Mammary epithelial cell (primary cell): ENCODE measurements at regions of chr21 and their contacts with region 1.

Region 1: DNA sequence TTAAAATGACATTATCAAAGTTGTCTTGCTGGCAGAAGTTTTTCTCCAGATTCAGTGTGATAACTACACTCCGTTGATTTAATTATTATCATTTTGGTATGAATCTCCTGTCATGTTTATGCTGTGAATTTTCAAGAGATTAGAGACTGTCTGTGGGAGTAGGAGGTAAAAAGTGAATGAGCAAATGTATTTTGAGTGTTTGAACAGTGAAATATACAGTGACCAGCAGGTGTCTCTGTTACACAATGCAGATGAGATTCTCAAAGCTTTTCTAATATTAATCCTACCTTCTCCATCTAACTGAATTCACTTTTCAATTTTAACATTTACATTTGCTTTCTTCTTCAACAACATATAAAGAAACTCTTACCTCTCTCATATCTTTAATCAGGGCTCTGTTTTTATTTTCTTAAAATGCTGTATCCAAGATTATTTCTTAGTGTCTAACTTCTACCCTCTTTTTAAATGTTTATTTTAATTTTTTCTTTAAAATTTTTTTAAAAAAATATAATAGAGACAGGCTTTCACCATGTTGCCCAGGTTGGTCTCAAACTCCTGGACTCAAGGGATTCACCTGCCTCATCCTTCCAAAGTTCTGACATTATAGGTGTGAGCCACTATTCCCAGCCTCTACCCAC is 20.9 kb upstream of the HSPA13 start:
- DNase-seq: peak; percentile 12
- H3K4me3 ChIP-seq: no peak overlapping the region
- H3K27ac ChIP-seq: no peak overlapping the region
- H3K4me1 ChIP-seq: no peaks in the 10 kb centered on the region
- H3K27me3 ChIP-seq: no peaks in the 10 kb centered on the region
- CTCF ChIP-seq: peak; percentile 55 to 63

Region 2: DNA sequence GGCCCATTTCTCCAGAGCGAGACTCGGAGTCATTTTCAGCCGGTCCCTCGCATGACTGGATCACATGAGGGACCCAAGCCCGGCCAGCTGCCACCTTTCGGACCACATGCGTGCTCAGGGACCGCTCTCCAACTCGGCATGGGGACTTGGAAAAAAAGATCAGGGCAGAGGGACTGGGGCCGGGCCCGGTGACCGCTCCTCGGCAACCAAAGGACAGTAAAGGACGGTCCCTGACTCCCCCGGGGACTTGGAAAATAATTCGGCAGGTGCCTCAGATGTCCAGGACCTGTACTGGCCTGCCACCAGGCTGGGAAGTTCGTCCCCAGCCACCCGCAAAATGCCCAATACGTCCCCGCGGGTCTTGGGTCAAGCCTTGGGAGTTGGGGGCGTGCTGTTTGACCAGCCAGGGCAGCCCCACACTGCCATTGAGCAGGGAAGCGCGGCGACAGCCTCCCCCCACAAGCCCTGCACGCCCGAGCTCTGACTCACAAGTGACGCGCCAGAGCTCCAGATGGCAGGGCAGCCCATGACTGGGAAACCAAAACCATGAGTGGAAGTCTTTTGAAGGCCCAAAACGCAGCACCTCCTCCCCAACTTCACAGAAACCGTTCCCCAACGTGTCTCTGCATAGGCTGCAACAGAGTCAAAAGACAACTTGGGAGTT is 327.5 kb before region 1 on chr21:
- CTCF ChIA-PET with region 1: no interaction called
- dilution Hi-C with region 1: no loop called
- in situ Hi-C with region 1: no loop called
- intact Hi-C with region 1: no loop called
- DNase-seq: no peak
- H3K4me3 ChIP-seq: no peak overlapping the region
- H3K27ac ChIP-seq: no peak overlapping the region
- H3K4me1 ChIP-seq: no peaks in the 10 kb centered on the region
- H3K27me3 ChIP-seq: no peaks in the 10 kb centered on the region
- CTCF ChIP-seq: no peak

Region 3: DNA sequence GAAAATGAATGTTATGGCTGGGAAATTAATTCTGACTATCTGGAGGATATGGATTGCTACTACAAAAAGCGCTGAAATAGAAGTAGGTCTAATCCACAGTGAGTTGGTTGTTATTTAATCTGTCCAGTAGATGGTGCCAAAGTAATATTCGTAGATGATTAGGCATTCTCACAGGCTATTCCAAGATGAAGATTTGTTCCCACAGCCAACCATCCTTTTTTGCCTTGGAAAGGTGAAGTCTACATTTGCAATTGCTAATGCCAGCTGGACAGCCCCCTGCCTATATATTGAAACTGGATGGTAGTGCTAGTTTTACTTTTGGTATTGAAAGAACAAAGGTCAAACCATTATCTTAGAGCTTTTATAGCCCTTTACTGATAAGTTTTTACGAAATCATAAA is 144.1 kb before region 1 on chr21:
- CTCF ChIA-PET with region 1: no interaction called
- dilution Hi-C with region 1: no loop called
- in situ Hi-C with region 1: no loop called
- intact Hi-C with region 1: loop called (anchors 5 kb)
- DNase-seq: peak; percentile 43
- H3K4me3 ChIP-seq: no peak overlapping the region
- H3K27ac ChIP-seq: no peak overlapping the region
- H3K4me1 ChIP-seq: no peaks in the 10 kb centered on the region
- H3K27me3 ChIP-seq: no peaks in the 10 kb centered on the region
- CTCF ChIP-seq: peak; percentile 38 to 59

Region 4: GRCh38 chr21:14773777-14774345 is 370.1 kb after region 1 on chr21:
- CTCF ChIA-PET with region 1: no interaction called
- dilution Hi-C with region 1: no loop called
- in situ Hi-C with region 1: no loop called
- intact Hi-C with region 1: loop called (anchors 10 kb)
- DNase-seq: peak; percentile 30
- H3K4me3 ChIP-seq: no peak overlapping the region
- H3K27ac ChIP-seq: no peak overlapping the region
- H3K4me1 ChIP-seq: no peaks in the 10 kb centered on the region
- H3K27me3 ChIP-seq: peaks cover 3% of the 10 kb centered on the region
- CTCF ChIP-seq: peak; percentile 59 to 85